ENCODE measurements at regions of chr17 and their contacts with region 1.

Region 1: DNA sequence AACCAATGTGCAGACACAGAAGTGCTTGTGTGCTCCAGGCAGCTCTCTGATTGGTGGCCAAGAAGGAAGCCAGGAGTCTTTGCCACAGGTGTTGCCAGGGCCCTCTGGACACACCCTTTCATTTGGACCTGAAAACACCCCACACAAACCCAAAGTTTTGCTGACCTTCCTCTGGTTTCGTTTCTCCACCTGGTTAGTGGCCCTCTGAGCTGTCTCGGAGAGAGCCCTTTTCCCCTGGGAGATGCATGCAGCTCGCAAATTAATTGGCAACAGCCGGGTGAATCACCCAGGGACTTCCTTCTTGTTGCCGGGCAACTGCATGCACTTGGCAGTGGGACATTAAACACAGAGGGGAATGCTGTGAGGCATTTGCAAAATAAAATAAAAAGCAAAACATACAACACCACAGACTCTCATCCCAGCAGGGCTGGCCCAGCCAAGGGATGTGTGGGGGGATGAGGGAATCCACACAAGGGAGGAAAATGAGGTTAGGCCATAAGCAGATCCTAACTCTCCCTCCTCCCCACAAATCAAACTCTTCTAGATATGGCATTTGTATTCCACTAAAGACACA is 286.6 kb downstream of the SOX9 start:
- DNase-seq: no peak
- H3K4me3 ChIP-seq: no peak overlapping the region
- H3K27ac ChIP-seq: no peak overlapping the region
- H3K4me1 ChIP-seq: peaks cover 3% of the 10 kb centered on the region
- H3K27me3 ChIP-seq: no peaks in the 10 kb centered on the region
- CTCF ChIP-seq: no peak
- POLR2A ChIP-seq: no peak

Region 2: DNA sequence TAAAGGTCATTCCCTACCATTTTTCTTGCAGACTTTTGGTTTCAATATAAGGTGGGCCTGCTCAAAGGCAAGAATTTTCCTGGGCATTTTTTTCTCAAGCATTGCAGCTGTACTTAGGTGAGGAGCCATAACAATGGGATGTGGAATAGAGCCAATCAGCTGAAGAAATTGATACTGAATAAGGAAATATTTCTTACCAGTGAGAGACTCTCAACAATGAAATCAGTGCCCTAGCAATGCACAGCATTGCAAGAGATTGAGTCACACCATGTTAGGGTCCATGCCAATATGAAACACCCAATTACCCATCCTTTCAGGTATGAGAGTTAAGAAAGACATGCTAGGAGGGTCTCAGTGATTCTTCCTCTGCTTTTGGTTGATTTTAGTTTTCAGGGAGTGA is 49.0 kb before region 1 on chr17:
- intact Hi-C with region 1: loop called (anchors 10 kb)
- DNase-seq: no peak
- H3K4me3 ChIP-seq: no peak overlapping the region
- H3K27ac ChIP-seq: no peak overlapping the region
- H3K4me1 ChIP-seq: no peaks in the 10 kb centered on the region
- H3K27me3 ChIP-seq: no peaks in the 10 kb centered on the region
- CTCF ChIP-seq: no peak
- POLR2A ChIP-seq: no peak

Measured in testis (tissue), 5 donors.